ENCODE measurements at regions of chr1 and their contacts with region 1.

Region 1: DNA sequence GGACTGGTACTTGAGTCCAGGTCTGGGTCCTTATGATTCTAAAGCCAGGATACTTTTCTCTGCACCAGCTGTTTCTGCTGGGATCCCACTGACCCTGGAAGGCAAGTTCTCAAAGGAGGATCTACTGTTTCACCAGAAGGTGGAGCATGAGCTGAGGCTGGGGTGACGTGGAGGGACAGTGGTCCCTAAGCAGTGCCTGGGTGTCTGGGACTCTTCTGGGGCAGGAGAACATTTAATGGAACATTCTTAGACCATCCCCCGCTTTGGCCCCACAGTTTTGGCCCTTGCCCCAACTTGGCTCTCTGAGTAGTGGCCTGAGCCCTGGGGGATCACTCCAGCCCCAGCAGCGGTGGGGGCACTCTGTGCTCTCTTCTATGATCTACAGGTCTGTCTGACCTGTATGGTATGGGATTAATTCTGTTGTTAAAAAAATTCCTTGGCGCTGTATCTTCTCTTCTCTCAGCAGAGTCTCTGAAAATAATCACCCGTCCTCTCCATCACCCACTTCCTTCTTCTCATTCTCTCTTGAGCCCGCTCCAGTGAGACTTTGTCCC is 60.3 kb upstream of the CSF3R start:
- DNase-seq: no peak
- H3K4me3 ChIP-seq: no peak overlapping the region
- H3K27me3 ChIP-seq: peaks cover 2% of the 10 kb centered on the region; the same call in 1 of the 2 replicates
- CTCF ChIP-seq: peak; percentile 18; the same call in 1 of the 2 replicates

Region 2: DNA sequence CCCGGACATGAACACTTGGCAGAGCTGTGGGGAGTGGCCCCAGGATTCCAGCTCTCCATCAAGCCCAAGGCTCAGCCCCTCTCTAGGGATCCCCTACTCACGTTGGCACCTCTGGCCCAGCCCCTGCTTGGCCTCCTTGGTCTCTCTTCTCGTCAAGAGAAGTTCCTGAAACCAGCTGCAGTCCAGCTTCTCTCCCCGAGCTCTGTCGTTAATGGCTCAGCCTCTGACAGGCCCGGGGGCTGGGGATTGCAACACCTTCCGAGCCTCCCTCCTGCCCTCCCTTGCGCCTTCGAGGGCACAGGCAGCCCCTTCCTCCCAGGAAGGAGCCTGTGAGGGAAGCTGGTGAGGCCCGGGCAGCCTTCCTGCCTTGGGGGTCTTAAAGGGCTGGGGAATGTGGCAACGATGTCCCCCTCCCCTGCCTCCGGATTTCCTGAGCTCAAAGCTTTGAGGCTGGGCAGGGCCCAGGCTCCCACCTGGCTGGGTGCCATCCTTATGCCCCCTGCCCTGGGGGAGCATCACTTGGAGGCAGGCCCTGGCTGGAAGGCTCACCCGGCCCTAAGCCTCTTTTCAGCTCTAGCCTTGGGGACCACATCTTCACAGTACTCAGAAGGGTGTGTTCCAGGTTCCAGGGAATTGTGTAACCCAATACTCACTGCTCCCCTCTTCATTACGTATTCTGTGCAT is 60.2 kb before region 1 on chr1 and contains the start of gene CSF3R:
- CTCF ChIA-PET with region 1: no interaction called
- POLR2A ChIA-PET with region 1: no interaction called
- DNase-seq: no peak
- H3K4me3 ChIP-seq: no peak within 1 kb of the TSS
- H3K27me3 ChIP-seq: no peaks in the 10 kb centered on the region
- CTCF ChIP-seq: no peak
- polyA plus RNA-seq, gene CSF3R: not detected in 2 replicates

Region 3: GRCh38 chr1:36553591-36554322 is 10.7 kb after region 1 on chr1:
- CTCF ChIA-PET with region 1: interaction called, 10 read pairs
- POLR2A ChIA-PET with region 1: no interaction called
- DNase-seq: no peak
- H3K4me3 ChIP-seq: no peak overlapping the region
- H3K27me3 ChIP-seq: peaks cover 8% of the 10 kb centered on the region
- CTCF ChIP-seq: peak; percentile 65